ENCODE measurements at regions of chr2 and their contacts with region 1.

Region 1: DNA sequence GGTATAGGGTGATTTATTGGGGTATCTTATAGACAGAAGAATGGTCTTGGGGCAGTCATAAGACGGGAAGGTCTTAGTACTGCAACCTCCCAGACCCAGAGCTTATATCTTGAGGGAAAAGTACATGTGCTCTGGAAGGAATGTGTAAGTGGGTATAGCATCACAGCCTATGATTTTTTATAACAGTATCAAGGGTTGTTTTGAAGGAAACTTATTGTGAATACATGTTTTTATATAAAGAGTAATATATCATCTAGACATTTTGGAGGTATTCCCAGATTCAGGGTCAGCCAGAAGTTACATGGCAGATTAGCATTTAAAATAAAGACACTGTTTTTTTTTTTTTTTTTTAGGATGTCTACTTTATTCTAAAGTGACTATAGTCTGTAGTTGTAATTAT is 47.6 kb upstream of the STON1 start:
- DNase-seq: peak; percentile 88
- ATAC-seq: peak; percentile 69
- H3K4me3 ChIP-seq: no peak overlapping the region
- H3K27ac ChIP-seq: no peak overlapping the region
- H3K4me1 ChIP-seq: peaks cover 9% of the 10 kb centered on the region
- H3K27me3 ChIP-seq: no peaks in the 10 kb centered on the region
- CTCF ChIP-seq: no peak
- POLR2A ChIP-seq: no peak
- RAD21 ChIP-seq: no peak

Region 2: GRCh38 chr2:48092846-48093803 is 389.2 kb before region 1 on chr2:
- CTCF ChIA-PET with region 1: no interaction called
- POLR2A ChIA-PET with region 1: no interaction called
- dilution Hi-C with region 1: no loop called
- in situ Hi-C with region 1: no loop called
- intact Hi-C with region 1: no loop called
- DNase-seq: peak; percentile 57
- ATAC-seq: no peak
- H3K4me3 ChIP-seq: no peak overlapping the region
- H3K27ac ChIP-seq: no peak overlapping the region
- H3K4me1 ChIP-seq: 0 out of 2 replicates have a peak, but pooled peaks cover 3% of the 10 kb centered on the region
- H3K27me3 ChIP-seq: no peaks in the 10 kb centered on the region; the same call in 1 of the 2 replicates
- CTCF ChIP-seq: no peak
- POLR2A ChIP-seq: no peak
- RAD21 ChIP-seq: no peak

Region 3: DNA sequence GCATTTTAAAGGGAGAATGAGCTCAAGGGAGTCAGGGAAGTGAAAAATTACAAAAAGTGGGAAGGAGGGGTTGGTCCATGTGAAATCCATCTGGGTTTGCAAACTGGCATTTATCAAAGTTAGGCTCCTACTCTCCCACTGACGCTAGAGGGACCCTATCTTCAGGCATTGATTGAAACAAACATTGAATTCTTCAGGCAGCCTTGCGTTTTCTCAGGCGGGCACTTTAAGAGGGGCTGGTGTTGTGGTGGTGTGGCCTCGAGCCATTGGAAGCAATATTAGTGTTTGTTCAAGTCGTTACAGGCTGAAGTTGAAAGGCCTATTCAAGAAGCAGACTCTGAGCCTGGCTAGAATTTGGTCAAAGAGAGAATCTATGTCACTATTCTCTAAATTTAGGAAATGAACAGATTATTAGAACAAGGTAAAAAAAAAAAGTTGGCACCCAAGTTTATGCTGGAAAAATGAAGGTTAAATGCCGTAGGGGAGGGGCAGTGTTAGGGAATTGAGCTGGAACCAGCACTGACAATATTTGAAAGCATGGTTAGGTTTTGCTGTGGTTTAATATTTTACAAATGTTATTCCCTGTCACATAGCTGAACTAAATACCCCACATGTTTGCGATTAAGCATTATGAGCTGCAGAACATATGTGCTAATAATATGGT is 84.4 kb after region 1 on chr2:
- CTCF ChIA-PET with region 1: no interaction called
- POLR2A ChIA-PET with region 1: no interaction called
- dilution Hi-C with region 1: no loop called
- in situ Hi-C with region 1: no loop called
- intact Hi-C with region 1: loop called (anchors 5 kb)
- DNase-seq: peak; percentile 17
- ATAC-seq: peak; percentile 54; the same call in 1 of the 2 replicates
- H3K4me3 ChIP-seq: no peak overlapping the region
- H3K27ac ChIP-seq: no peak overlapping the region
- H3K4me1 ChIP-seq: no peaks in the 10 kb centered on the region
- H3K27me3 ChIP-seq: no peaks in the 10 kb centered on the region
- CTCF ChIP-seq: peak; percentile 38
- POLR2A ChIP-seq: no peak
- RAD21 ChIP-seq: peak; percentile 25; the same call in 1 of the 2 replicates